Activated CD4-positive, alpha-beta T cell treated with anti-CD3 and anti-CD28 coated beads for 36 hours (primary cell): ENCODE measurements at regions of chr3 and their contacts with region 1.

Region 1: GRCh38 chr3:36817806-36818533 is 53.6 kb upstream of the DCLK3 start:
- DNase-seq: no peak
- ATAC-seq: no peak
- H3K4me3 Mint-ChIP-seq: no peak overlapping the region
- H3K27ac Mint-ChIP-seq: no peak overlapping the region
- H3K4me1 Mint-ChIP-seq: no peaks in the 10 kb centered on the region
- H3K27me3 Mint-ChIP-seq: no peaks in the 10 kb centered on the region

Region 2: DNA sequence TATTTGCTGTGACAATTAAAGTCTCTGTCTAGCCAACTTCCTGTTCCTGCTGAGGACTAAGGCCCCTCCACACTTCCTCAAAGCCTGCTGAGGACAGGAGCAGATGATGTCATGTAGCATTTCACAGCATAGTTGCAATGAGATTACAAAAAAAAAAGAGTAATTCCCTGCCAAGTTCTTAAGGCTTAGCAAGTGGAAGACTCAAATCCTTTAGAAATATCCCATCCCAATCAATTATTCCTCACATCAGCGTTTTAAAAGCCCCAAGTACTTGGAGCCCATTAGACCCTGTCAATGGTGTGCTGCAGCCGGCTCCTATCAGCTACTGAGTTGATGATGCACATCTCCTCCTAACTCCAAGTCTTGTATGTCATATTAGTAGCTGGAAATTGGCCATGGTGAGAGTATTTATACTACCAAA is 75.2 kb after region 1 on chr3:
- CTCF ChIA-PET with region 1: no interaction called
- POLR2A ChIA-PET with region 1: interaction called, 10 read pairs
- intact Hi-C with region 1: no loop called
- DNase-seq: peak; percentile 39
- ATAC-seq: peak; percentile 76
- H3K4me3 Mint-ChIP-seq: no peak overlapping the region
- H3K27ac Mint-ChIP-seq: peak overlapping the region; percentile 63
- H3K4me1 Mint-ChIP-seq: peaks cover 41% of the 10 kb centered on the region
- H3K27me3 Mint-ChIP-seq: no peaks in the 10 kb centered on the region